Activated T-helper 1 cell treated with anti-CD3 and anti-CD28 coated beads, Interleukin-12 subunit alpha, Interleukin-12 subunit beta, Interleukin-2, Interleukin-4 antibody, amounts not matched to agents 30 ng/mL and 10 ng/mL and 1 ng/mL, durations not matched to agents 14 hours and 24 hours and 36 hours (primary cell): ENCODE measurements at regions of chr22 and their contacts with region 1.

Region 1: DNA sequence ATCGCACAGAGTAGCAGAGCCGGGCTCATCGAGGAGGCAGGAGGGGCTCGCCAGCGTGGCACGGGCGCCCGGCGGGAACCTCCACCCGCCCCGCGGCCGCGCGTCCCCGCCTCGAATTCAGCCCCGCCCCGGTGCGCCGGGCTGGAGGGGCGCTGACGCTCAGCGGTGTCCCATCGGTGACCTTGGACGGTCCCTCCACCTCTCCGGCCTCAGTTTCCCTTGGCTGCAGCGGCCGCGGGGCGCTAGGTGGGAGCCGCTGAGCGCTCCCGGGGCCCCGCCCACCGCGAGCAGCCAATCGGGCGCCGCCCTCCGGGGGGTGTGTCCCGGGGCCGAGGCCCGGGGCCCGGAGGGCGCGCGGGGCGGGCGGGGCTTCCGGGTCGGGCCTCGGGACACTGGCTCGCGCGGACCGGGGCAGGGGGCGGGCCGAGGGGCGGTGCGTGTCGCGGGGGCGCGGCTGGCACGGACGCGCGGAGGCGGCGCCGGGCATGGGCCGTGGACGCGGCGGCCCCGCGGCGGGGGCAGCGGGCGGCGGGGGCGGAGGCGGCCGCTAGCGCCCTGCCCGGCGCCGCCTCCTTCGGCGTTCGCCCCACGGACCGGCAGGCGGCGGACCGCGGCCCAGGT is at the start of gene PPARA:
- DNase-seq: peak; percentile 88
- H3K4me3 Mint-ChIP-seq: peak within 1 kb of the TSS; percentile 85
- H3K27ac Mint-ChIP-seq: peak within 1 kb of the TSS; percentile 63
- H3K4me1 Mint-ChIP-seq: peaks cover 18% of the 10 kb centered on the region
- H3K27me3 Mint-ChIP-seq: peaks cover 21% of the 10 kb centered on the region
- total RNA-seq, gene PPARA: 11.6 and 14.3 TPM in 2 replicates

Region 2: GRCh38 chr22:46035742-46036557 is 114.2 kb before region 1 on chr22:
- intact Hi-C with region 1: no loop called
- DNase-seq: peak; percentile 99
- H3K4me3 Mint-ChIP-seq: peak overlapping the region; percentile 84
- H3K27ac Mint-ChIP-seq: peak overlapping the region; percentile 76
- H3K4me1 Mint-ChIP-seq: peaks cover 19% of the 10 kb centered on the region
- H3K27me3 Mint-ChIP-seq: no peaks in the 10 kb centered on the region

Region 3: DNA sequence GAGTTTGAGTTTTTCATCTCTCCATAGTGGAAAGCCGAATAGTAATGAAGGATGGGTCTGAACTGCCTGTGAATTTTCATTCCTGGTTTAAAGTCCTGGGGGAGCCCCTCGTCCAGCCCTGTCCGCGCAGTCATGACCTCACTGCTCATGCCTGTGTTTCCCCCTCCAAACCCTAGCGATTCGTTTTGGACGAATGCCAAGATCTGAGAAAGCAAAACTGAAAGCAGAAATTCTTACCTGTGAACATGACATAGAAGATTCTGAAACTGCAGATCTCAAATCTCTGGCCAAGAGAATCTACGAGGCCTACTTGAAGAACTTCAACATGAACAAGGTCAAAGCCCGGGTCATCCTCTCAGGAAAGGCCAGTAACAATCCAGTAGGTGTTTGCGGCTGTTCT is 69.5 kb after region 1 on chr22:
- intact Hi-C with region 1: loop called (anchors 2 kb)
- DNase-seq: peak; percentile 18
- H3K4me3 Mint-ChIP-seq: no peak overlapping the region
- H3K27ac Mint-ChIP-seq: peak overlapping the region; percentile 67
- H3K4me1 Mint-ChIP-seq: peaks cover 22% of the 10 kb centered on the region
- H3K27me3 Mint-ChIP-seq: no peaks in the 10 kb centered on the region

Region 4: GRCh38 chr22:46267431-46268279 is 117.5 kb after region 1 on chr22 and contains the start of gene TTC38:
- intact Hi-C with region 1: loop called (anchors 5 kb)
- DNase-seq: peak; percentile 40
- H3K4me3 Mint-ChIP-seq: peak within 1 kb of the TSS; percentile 93
- H3K27ac Mint-ChIP-seq: peak within 1 kb of the TSS; percentile 73
- H3K4me1 Mint-ChIP-seq: peaks cover 18% of the 10 kb centered on the region
- H3K27me3 Mint-ChIP-seq: peaks cover 24% of the 10 kb centered on the region
- total RNA-seq, gene TTC38: 23.0 and 30.2 TPM in 2 replicates